Esophagus muscularis mucosa (tissue), 4 donors: ENCODE measurements at regions of chr7 and their contacts with region 1.

Region 1: DNA sequence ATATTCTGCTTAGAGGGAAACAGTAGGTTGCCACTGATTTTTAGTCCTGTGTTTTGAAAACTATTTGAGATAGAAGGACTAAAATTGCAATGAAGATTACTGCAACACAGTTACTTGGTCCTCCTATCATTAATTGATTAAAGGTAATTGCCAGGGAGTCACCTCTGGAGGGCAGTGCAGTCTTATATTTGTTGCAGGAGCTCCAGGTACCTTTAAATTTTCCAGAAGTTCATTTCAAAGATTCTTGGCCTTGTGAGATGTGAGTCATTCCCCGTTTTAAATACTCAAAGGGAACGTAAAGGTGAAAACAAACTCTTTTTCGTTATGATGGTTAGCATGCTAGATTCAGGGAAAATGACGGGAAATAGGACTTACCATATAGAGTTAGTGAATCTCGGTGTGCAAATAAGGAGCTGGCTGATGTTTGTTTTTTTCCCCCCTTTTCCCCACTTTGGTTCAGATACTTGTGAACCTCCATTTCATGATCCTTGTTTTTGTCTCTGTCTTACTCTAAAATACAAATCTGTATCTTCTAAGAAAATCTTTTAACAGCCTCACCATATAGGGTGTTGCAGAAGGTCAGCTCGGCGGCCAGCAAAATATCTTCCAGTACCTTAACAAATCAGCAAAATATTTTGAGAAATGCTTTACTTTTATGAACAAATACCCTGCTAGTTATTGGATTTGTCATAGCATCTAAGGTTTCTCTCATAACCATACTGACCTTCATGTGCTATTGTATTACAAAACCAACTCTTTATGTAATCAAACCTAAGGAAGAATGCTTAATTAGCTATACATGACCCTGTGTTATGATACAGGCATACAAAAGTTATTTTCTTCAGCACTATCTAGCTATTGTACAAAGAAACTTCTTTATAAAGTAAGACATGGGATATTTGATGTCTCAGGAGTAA is 143.0 kb upstream of the HDAC9 start:
- DNase-seq: no peak
- H3K4me3 ChIP-seq: peak overlapping the region in 2 of 4 donors; percentile 8 to 13
- H3K27ac ChIP-seq: peak overlapping the region; percentile 1 to 28 (median 16)
- H3K4me1 ChIP-seq: peaks cover 0 to 46% (median 27%) of the 10 kb centered on the region in 4 donors
- H3K27me3 ChIP-seq: no peaks in the 10 kb centered on the region
- CTCF ChIP-seq: peak; percentile 44 to 48 (median 48)
- EP300 ChIP-seq: no peak
- POLR2A ChIP-seq: no peak

Region 2: DNA sequence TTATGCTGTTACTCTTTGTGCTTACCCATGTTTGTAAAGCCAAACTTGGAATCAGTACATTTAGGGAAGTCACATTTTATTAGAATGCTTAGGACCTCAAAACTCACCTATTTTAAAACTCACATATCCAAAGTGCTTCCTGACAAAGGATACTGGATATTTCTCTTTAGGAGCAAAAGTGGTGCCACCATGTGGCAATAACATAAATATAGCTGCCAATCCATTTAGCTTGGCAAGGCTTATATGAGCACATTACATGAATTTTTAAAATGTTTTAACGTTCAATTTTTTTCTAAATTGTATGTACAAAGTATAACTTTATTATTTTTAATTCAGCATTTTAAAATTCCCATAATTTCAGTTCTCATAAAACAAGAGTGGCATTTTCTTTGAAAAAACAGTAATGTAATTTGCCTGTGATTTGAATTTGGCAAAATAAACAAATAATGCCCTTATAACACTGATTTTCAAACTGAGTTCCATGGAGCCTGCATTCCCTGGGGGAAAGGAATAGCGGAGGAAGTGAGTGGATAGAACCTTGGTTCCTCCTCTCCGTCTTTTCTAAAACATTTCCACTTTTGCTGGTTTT is 218.4 kb after region 1 on chr7:
- intact Hi-C with region 1: loop called (anchors 5 kb)
- DNase-seq: no peak
- H3K4me3 ChIP-seq: no peak overlapping the region
- H3K27ac ChIP-seq: no peak overlapping the region
- H3K4me1 ChIP-seq: peaks cover 5 to 7% (median 6%) of the 10 kb centered on the region in 4 donors
- H3K27me3 ChIP-seq: no peaks in the 10 kb centered on the region
- CTCF ChIP-seq: peak; percentile 24 to 44 (median 26)
- EP300 ChIP-seq: no peak
- POLR2A ChIP-seq: no peak

Region 3: GRCh38 chr7:18666107-18666728 is 313.6 kb after region 1 on chr7:
- intact Hi-C with region 1: loop called (anchors 5 kb)
- DNase-seq: peak; percentile 94
- H3K4me3 ChIP-seq: no peak overlapping the region
- H3K27ac ChIP-seq: no peak overlapping the region
- H3K4me1 ChIP-seq: peaks cover 0 to 21% (median 2%) of the 10 kb centered on the region in 4 donors
- H3K27me3 ChIP-seq: no peaks in the 10 kb centered on the region
- CTCF ChIP-seq: peak; percentile 69 to 92 (median 79)
- EP300 ChIP-seq: no peak
- POLR2A ChIP-seq: no peak